GM12878 (cell line): ENCODE measurements at regions of chr4 and their contacts with region 1.

Region 1: GRCh38 chr4:77193511-77194102 is 36.6 kb downstream of the CCNG2 start:
- DNase-seq: peak; percentile 69
- ATAC-seq: peak; percentile 96
- H3K4me3 ChIP-seq: peak overlapping the region; percentile 32; the same call in 1 of the 2 replicates
- H3K27ac ChIP-seq: peak overlapping the region; percentile 90
- H3K4me1 ChIP-seq: peaks cover 37% of the 10 kb centered on the region
- H3K27me3 ChIP-seq: no peaks in the 10 kb centered on the region
- CTCF ChIP-seq: no peak
- EP300 ChIP-seq: peak in 1 of 2 experiments; percentile 59; a peak in 1 of 4 replicates
- POLR2A ChIP-seq: peak; percentile 72
- RAD21 ChIP-seq: no peak

Region 2: DNA sequence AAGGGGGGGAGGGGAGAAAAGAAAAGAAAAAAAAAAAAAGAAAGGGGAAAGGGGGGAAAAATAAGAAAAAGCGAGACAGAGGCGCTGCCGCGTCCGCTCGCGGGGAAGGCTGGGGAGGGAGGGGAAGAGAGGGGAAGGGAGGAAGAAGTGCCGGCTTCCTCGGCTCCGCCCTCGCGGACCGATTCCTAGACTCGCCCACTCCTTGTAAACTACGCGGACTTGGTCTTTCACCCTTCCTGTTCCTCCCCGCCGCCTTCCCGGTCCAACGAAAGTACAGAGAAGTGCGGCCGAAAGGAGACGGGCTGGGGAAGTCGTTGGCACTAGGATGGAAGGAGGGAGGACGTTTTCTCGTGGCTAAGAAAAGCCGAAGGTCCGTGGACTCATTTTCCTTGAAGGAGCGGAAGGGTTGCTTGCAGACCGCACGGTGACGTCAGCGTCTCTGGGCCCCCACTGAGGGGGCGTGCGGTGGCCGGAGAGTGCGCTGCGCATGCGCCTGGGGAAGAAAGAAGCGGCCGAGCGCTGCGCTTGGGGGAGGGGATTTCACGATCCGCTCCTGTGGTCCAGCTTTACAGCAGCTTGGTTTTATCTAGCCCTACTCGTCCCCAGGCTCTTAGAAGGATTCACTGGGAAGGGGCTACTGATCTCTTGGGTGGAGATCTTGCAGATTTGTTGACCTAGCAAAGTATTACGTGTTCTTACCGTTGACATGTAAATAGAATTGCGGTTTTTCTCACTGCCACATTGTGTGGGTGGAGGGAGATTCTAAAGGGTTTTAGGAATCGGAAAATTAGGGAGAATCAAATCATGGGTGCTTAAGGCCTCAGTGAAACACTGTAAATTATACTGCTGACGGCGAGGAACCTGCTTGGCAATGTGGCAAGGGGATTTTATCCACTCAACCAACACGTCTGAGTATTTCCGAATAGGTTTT is 117.5 kb before region 1 on chr4 and contains the start of gene CCNI:
- CTCF ChIA-PET with region 1: interaction called, 7 read pairs
- POLR2A ChIA-PET with region 1: interaction called, 15 read pairs
- RAD21 ChIA-PET with region 1: interaction called, 9 read pairs
- SMC1A ChIA-PET with region 1: interaction called, 10 read pairs
- in situ Hi-C with region 1: no loop called
- intact Hi-C with region 1: no loop called
- DNase-seq: peak; percentile 92
- ATAC-seq: peak; percentile 77
- H3K4me3 ChIP-seq: peak within 1 kb of the TSS; percentile 97
- H3K27ac ChIP-seq: peak within 1 kb of the TSS; percentile 100
- H3K4me1 ChIP-seq: 0 out of 2 replicates have a peak, but pooled peaks cover 3% of the 10 kb centered on the region
- H3K27me3 ChIP-seq: no peaks in the 10 kb centered on the region
- CTCF ChIP-seq: no peak
- EP300 ChIP-seq: peak; percentile 4 to 78; a peak in 3 of 4 replicates
- POLR2A ChIP-seq: peak; percentile 82
- RAD21 ChIP-seq: no peak
- polyA plus RNA-seq, gene CCNI: 72.4 to 82.4 TPM

Region 3: GRCh38 chr4:77104791-77105540 is 88.6 kb before region 1 on chr4:
- CTCF ChIA-PET with region 1: interaction called, 535 read pairs
- POLR2A ChIA-PET with region 1: interaction called, 9 read pairs
- RAD21 ChIA-PET with region 1: interaction called, 229 read pairs
- SMC1A ChIA-PET with region 1: interaction called, 286 read pairs
- in situ Hi-C with region 1: no loop called
- intact Hi-C with region 1: no loop called
- DNase-seq: no peak
- ATAC-seq: peak; percentile 38
- H3K4me3 ChIP-seq: no peak overlapping the region
- H3K27ac ChIP-seq: no peak overlapping the region
- H3K4me1 ChIP-seq: 0 out of 2 replicates have a peak, but pooled peaks cover 3% of the 10 kb centered on the region
- H3K27me3 ChIP-seq: no peaks in the 10 kb centered on the region
- CTCF ChIP-seq: no peak
- EP300 ChIP-seq: no peak
- POLR2A ChIP-seq: no peak
- RAD21 ChIP-seq: no peak

Region 4: DNA sequence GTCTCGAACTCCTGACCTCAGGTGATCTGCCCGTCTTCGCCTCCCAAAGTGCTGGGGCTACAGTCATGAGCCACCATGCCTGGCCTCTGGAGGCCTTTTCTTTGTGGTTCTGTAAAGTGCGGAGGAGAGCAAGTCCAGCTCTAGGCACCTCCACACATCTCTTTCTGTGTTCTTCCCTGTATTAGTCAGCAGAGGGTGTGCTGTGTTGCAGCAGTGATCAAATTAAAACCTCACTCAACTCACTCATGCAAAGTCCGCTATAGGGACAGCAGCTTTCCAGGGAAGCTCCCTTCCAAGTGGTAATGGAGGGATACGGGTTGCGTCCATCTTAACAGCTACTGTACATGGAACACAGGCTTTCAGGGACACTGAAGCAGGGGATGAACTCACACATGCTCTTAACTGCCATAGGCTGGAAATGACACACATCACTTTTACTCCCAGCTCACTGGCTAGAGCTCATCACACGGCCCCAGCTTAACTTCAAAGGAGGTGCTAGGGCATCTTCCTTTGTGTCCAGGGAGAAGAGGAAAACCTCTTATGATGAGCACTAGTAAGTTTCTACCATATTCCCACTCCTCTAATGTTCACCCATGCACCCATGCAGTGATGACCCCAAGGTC is 72.6 kb before region 1 on chr4:
- CTCF ChIA-PET with region 1: interaction called, 6 read pairs
- POLR2A ChIA-PET with region 1: interaction called, 3 read pairs
- RAD21 ChIA-PET with region 1: interaction called, 6 read pairs
- SMC1A ChIA-PET with region 1: interaction called, 72 read pairs
- in situ Hi-C with region 1: no loop called
- intact Hi-C with region 1: no loop called
- DNase-seq: no peak
- ATAC-seq: peak; percentile 79
- H3K4me3 ChIP-seq: no peak overlapping the region
- H3K27ac ChIP-seq: no peak overlapping the region
- H3K4me1 ChIP-seq: no peaks in the 10 kb centered on the region
- H3K27me3 ChIP-seq: no peaks in the 10 kb centered on the region
- CTCF ChIP-seq: peak; percentile 17 to 38 (median 22); a peak in 4 of 6 replicates
- EP300 ChIP-seq: no peak
- POLR2A ChIP-seq: no peak
- RAD21 ChIP-seq: peak; percentile 52; the same call in 1 of the 2 replicates